Calu3 (cell line): ENCODE measurements at regions of chr11 and their contacts with region 1.

Region 1: DNA sequence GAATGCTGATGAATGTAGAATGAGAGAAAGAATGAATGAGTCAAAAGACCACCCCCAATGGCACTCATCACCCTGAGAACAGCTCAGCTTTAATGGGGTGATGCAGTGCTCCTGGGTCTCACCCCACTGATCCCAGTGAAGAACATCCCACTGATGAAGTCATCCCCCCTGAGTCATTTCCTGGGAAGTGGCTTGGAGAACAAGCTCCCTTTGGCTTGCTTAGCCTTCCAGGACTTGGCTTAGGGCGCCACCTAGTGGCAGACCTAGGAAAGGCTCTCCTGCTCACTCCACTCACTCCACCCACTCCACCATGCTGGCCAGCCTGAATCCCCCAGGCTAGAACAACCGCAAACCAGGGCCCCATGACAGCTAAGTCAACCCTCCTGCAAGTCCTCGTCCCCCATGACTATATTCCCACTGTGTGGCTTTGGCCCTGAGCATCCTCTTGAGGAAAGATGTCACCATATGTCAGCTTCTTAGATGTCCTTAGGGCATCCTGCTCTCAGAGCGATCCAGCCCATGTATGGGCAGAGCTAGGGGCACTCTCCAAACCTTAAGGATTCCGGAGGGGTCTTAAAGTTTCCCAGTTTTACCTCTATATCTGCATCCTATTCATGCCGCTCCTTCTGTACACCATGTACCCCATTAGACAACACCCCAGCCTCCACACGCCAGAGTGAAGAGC is 17.8 kb upstream of the TMPRSS13 start:
- DNase-seq: peak; percentile 87
- H3K4me3 Mint-ChIP-seq: no peak overlapping the region
- H3K27ac Mint-ChIP-seq: no peak overlapping the region
- H3K4me1 Mint-ChIP-seq: peaks cover 8% of the 10 kb centered on the region
- H3K27me3 Mint-ChIP-seq: no peaks in the 10 kb centered on the region
- CTCF ChIP-seq: peak; percentile 82

Region 2: DNA sequence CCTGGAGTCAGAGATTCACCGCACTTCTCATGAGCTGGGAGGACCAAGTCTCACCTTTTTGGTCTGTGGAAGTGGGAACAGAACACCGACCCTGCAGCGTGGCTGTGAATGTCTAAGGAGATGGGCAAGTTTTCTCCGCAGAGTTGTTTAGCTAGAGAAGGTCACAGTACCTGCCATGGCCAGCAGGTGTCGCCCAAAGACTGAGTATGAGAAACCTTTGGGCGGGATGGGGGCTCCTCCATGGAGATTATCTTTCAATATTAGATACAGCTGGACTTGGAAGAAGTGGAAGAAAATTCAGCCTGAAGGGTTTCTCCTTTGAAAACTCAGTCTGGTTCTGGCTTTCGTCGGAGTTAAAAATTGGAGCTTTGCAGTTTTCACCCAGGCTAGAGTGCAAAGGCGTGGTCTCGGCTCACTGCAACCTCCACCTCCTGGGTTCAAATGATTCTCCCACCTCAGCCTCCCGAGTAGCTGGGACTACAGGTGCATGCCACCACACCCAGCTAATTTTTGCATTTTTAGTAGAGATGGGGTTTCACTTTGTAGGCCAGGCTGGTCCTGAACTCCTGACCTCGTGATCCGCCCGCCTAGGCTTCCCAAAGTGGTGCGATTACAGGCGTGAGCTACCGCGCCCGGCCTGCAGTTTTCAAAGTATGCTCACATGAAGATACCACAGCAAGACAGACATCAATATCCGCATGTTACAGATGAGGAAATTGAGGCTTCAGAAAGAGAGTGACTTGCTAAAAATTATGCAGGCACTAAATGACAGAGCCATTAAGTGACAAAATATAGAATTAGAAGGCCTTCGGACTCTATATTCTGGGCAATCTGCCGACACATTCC is 139.3 kb before region 1 on chr11:
- CTCF ChIA-PET with region 1: interaction called, 13 read pairs
- intact Hi-C with region 1: no loop called
- DNase-seq: peak; percentile 70
- H3K4me3 Mint-ChIP-seq: no peak overlapping the region
- H3K27ac Mint-ChIP-seq: no peak overlapping the region
- H3K4me1 Mint-ChIP-seq: peaks cover 23% of the 10 kb centered on the region
- H3K27me3 Mint-ChIP-seq: peaks cover 14% of the 10 kb centered on the region
- CTCF ChIP-seq: peak; percentile 67

Region 3: DNA sequence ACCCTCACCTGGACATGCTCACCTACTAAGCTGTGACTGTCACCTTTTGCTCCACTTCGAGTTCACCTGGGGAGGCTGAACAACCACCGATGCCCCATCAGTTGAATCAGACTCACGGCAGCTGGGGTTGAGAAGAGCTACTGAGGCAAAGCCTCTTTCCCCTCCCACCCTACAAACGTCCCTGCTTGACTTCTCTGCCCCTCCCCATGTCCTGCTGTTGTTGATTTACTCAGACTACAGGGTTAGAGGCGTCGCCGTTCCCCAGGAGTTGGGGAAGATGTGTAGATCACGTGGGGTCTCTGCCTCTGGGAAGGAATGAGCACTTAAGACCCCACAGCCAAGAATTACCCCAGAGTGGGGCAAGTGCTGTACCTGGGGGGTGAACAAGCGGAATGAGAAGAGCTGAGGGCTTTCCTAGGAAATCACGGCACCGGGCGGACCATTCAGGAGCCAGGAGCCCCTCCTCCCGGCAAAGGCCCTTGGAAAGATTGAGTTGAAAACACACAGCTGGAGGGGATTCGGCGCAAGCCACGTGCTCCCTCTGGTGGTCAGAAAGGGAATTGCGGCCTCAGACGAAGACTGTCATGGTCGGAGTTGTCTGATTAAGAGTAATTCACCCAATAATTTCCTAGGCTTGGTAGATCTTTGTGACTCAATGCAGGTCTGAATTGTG is 129.5 kb before region 1 on chr11:
- CTCF ChIA-PET with region 1: interaction called, 54 read pairs
- intact Hi-C with region 1: loop called (anchors 2 kb)
- DNase-seq: peak; percentile 81
- H3K4me3 Mint-ChIP-seq: no peak overlapping the region
- H3K27ac Mint-ChIP-seq: peak overlapping the region; percentile 84
- H3K4me1 Mint-ChIP-seq: peaks cover 61% of the 10 kb centered on the region
- H3K27me3 Mint-ChIP-seq: no peaks in the 10 kb centered on the region
- CTCF ChIP-seq: peak; percentile 85

Region 4: DNA sequence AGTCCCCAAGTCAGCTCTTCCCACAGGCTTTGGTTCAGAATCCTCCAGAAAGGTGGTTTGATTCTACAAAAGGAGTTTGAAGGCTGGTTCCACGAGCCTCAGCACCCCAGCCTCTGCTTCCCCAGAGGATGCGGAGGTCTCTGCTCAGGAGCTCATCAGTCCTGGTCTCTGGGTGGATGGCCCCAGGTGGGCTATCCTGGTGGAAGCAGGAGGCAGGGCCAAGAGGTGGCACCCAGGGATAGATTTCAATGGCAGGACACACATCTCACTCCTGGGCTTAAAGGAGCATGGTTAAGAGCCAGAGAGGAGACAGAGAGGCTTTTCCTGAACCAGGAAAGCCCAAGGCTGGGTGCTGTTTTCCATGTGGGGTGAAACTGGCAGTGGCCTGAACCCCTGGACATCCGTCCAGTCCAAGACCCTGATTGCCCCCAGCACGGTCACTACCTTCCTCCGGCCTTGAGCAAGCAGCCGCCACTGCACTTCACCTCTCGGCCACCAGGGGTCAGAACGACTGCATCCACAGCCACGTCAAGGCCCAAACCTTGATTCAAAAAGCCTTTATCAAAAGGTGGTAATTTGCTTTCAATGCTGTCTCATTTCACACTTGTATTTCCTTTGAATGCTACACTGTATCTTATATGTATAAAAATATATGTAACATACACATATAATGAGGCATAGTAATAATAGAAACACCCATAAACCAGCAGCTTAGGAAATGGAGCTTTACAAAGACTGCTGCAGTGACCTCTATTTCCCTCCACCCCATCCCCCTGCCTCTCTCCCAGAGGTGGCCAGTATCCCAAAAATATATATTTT is 103.1 kb before region 1 on chr11:
- CTCF ChIA-PET with region 1: interaction called, 23 read pairs
- intact Hi-C with region 1: loop called (anchors 1 kb)
- DNase-seq: peak; percentile 76
- H3K4me3 Mint-ChIP-seq: no peak overlapping the region
- H3K27ac Mint-ChIP-seq: no peak overlapping the region
- H3K4me1 Mint-ChIP-seq: no peaks in the 10 kb centered on the region
- H3K27me3 Mint-ChIP-seq: peaks cover 13% of the 10 kb centered on the region
- CTCF ChIP-seq: peak; percentile 89

Region 5: GRCh38 chr11:117903505-117904392 is 43.2 kb before region 1 on chr11:
- CTCF ChIA-PET with region 1: interaction called, 10 read pairs
- intact Hi-C with region 1: no loop called
- DNase-seq: no peak
- H3K4me3 Mint-ChIP-seq: no peak overlapping the region
- H3K27ac Mint-ChIP-seq: no peak overlapping the region
- H3K4me1 Mint-ChIP-seq: peaks cover 8% of the 10 kb centered on the region
- H3K27me3 Mint-ChIP-seq: peaks cover 16% of the 10 kb centered on the region
- CTCF ChIP-seq: no peak

Region 6: GRCh38 chr11:118051611-118052461 is 104.9 kb after region 1 on chr11:
- CTCF ChIA-PET with region 1: interaction called, 9 read pairs
- intact Hi-C with region 1: loop called (anchors 1 kb)
- DNase-seq: no peak
- H3K4me3 Mint-ChIP-seq: no peak overlapping the region
- H3K27ac Mint-ChIP-seq: no peak overlapping the region
- H3K4me1 Mint-ChIP-seq: no peaks in the 10 kb centered on the region
- H3K27me3 Mint-ChIP-seq: peaks cover 21% of the 10 kb centered on the region
- CTCF ChIP-seq: no peak